ENCODE measurements at regions of chr13 and their contacts with region 1.

Region 1: GRCh38 chr13:51286135-51287002 is 53.1 kb upstream of the SERPINE3 start:
- DNase-seq: peak; percentile 24 to 77 (median 57)
- ATAC-seq: peak; percentile 67
- H3K4me3 ChIP-seq: no peak overlapping the region
- H3K4me3 Mint-ChIP-seq: no peak overlapping the region
- H3K27ac ChIP-seq: no peak overlapping the region
- H3K27ac Mint-ChIP-seq: no peak overlapping the region
- H3K4me1 ChIP-seq: no peaks in the 10 kb centered on the region
- H3K4me1 Mint-ChIP-seq: no peaks in the 10 kb centered on the region
- H3K27me3 ChIP-seq: no peaks in the 10 kb centered on the region
- H3K27me3 Mint-ChIP-seq: no peaks in the 10 kb centered on the region
- CTCF ChIP-seq: peak; percentile 78

Region 2: DNA sequence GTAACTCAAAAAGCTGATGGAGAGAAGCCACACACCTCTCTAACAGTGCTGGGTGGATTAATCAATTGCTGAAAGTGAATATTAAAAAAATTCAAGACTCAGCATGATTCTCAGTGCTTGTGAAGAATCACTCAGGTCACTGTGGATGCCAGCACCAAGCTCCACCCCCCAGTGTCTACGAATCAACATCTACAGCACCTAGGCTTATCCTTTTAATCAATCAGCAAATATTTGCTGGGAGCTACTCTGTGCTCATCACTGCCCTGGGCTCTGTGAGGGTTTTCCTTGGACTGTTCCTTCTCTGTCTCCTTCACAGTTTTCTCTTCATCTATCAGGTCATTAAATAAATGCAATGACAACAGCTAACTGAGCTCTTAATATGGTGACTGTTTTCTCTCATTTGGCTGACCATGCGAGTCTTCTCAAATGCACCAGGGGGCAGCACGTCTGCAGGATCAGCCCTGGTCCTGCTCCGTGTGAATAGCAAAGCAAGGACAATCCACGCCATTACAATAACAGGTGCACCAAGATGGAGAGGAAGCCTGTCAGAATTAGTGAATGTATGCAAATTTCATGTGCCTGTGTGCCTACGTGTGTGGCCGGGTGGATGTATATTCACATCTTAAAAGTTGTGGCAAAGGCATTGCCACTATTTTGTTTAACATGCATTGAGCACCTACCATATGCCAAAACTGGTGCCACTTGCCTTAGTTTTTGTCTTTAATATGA is 160.7 kb before region 1 on chr13:
- CTCF ChIA-PET with region 1: interaction called, 8 read pairs
- POLR2A ChIA-PET with region 1: no interaction called
- intact Hi-C with region 1: loop called in 1 of 2 experiments (anchors 5 kb)
- DNase-seq: peak in 4 of 9 experiments; percentile 23 to 60 (median 39)
- ATAC-seq: peak; percentile 57
- H3K4me3 ChIP-seq: no peak overlapping the region
- H3K4me3 Mint-ChIP-seq: no peak overlapping the region
- H3K27ac ChIP-seq: no peak overlapping the region
- H3K27ac Mint-ChIP-seq: no peak overlapping the region
- H3K4me1 ChIP-seq: no peaks in the 10 kb centered on the region
- H3K4me1 Mint-ChIP-seq: peaks cover 3% of the 10 kb centered on the region
- H3K27me3 ChIP-seq: no peaks in the 10 kb centered on the region
- H3K27me3 Mint-ChIP-seq: peaks cover 14% of the 10 kb centered on the region
- CTCF ChIP-seq: peak; percentile 48

Region 3: GRCh38 chr13:51269039-51269438 is 17.3 kb before region 1 on chr13:
- CTCF ChIA-PET with region 1: interaction called, 25 read pairs
- POLR2A ChIA-PET with region 1: no interaction called
- intact Hi-C with region 1: no loop called
- DNase-seq: no peak
- ATAC-seq: no peak
- H3K4me3 ChIP-seq: no peak overlapping the region
- H3K4me3 Mint-ChIP-seq: no peak overlapping the region
- H3K27ac ChIP-seq: no peak overlapping the region
- H3K27ac Mint-ChIP-seq: no peak overlapping the region
- H3K4me1 ChIP-seq: no peaks in the 10 kb centered on the region
- H3K4me1 Mint-ChIP-seq: no peaks in the 10 kb centered on the region
- H3K27me3 ChIP-seq: no peaks in the 10 kb centered on the region
- H3K27me3 Mint-ChIP-seq: no peaks in the 10 kb centered on the region
- CTCF ChIP-seq: no peak

Region 4: GRCh38 chr13:51297556-51297955 is 11.2 kb after region 1 on chr13:
- CTCF ChIA-PET with region 1: interaction called, 14 read pairs
- POLR2A ChIA-PET with region 1: interaction called, 3 read pairs
- intact Hi-C with region 1: no loop called
- DNase-seq: no peak
- ATAC-seq: no peak
- H3K4me3 ChIP-seq: no peak overlapping the region
- H3K4me3 Mint-ChIP-seq: no peak overlapping the region
- H3K27ac ChIP-seq: no peak overlapping the region
- H3K27ac Mint-ChIP-seq: no peak overlapping the region
- H3K4me1 ChIP-seq: no peaks in the 10 kb centered on the region
- H3K4me1 Mint-ChIP-seq: no peaks in the 10 kb centered on the region
- H3K27me3 ChIP-seq: no peaks in the 10 kb centered on the region
- H3K27me3 Mint-ChIP-seq: peaks cover 3% of the 10 kb centered on the region
- CTCF ChIP-seq: no peak

Region 5: GRCh38 chr13:51303063-51303552 is 16.7 kb after region 1 on chr13:
- CTCF ChIA-PET with region 1: interaction called, 11 read pairs
- POLR2A ChIA-PET with region 1: no interaction called
- intact Hi-C with region 1: no loop called
- DNase-seq: no peak
- ATAC-seq: no peak
- H3K4me3 ChIP-seq: no peak overlapping the region
- H3K4me3 Mint-ChIP-seq: no peak overlapping the region
- H3K27ac ChIP-seq: no peak overlapping the region
- H3K27ac Mint-ChIP-seq: no peak overlapping the region
- H3K4me1 ChIP-seq: no peaks in the 10 kb centered on the region
- H3K4me1 Mint-ChIP-seq: no peaks in the 10 kb centered on the region
- H3K27me3 ChIP-seq: no peaks in the 10 kb centered on the region
- H3K27me3 Mint-ChIP-seq: peaks cover 3% of the 10 kb centered on the region
- CTCF ChIP-seq: no peak